Right lobe of liver (tissue), 6 donors: ENCODE measurements at regions of chr6 and their contacts with region 1.

Region 1: GRCh38 chr6:7238900-7239589 is 74.0 kb downstream of the SSR1 start:
- DNase-seq: peak; percentile 94 to 97 (median 97)
- ATAC-seq: peak; percentile 67 to 79 (median 74)
- H3K4me3 ChIP-seq: no peak overlapping the region
- H3K27ac ChIP-seq: peak overlapping the region; percentile 40 to 90 (median 61)
- H3K4me1 ChIP-seq: peaks cover 0 to 94% (median 40%) of the 10 kb centered on the region in 4 donors
- H3K27me3 ChIP-seq: no peaks in the 10 kb centered on the region
- CTCF ChIP-seq: peak; percentile 71 to 83 (median 76)
- POLR2A ChIP-seq: no peak

Region 2: GRCh38 chr6:6736791-6737654 is 502.0 kb before region 1 on chr6:
- intact Hi-C with region 1: loop called in 1 of 2 experiments (anchors 10 kb)
- DNase-seq: no peak
- ATAC-seq: peak; percentile 33 to 57 (median 42)
- H3K4me3 ChIP-seq: peak overlapping the region in 1 of 3 donors; percentile 30
- H3K27ac ChIP-seq: no peak overlapping the region
- H3K4me1 ChIP-seq: no peaks in the 10 kb centered on the region
- H3K27me3 ChIP-seq: no peaks in the 10 kb centered on the region
- CTCF ChIP-seq: no peak
- POLR2A ChIP-seq: no peak

Region 3: DNA sequence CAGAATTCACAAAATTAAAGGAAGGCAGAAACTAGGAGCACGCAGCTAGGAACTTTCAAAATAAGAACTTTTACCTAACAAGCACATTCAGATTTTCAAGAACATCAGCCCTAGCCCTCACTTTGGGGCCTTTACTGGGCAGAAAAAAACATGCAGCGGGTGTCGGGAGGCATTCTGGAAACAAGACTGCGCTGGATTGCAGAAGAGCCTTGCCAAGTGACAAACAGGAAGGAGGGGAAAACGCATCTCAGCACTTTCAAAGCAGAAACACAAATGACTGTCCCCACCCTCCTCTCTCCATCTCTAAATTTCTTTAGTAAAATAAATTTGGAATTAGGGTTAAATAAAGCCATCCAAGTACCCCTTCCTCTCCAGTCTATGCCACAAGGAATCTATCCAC is 205.8 kb before region 1 on chr6:
- intact Hi-C with region 1: no loop called
- DNase-seq: no peak
- ATAC-seq: peak; percentile 36 to 65 (median 48)
- H3K4me3 ChIP-seq: no peak overlapping the region
- H3K27ac ChIP-seq: no peak overlapping the region
- H3K4me1 ChIP-seq: peaks cover 0 to 8% (median 0%) of the 10 kb centered on the region in 4 donors
- H3K27me3 ChIP-seq: no peaks in the 10 kb centered on the region
- CTCF ChIP-seq: no peak
- POLR2A ChIP-seq: no peak

Region 4: GRCh38 chr6:7166410-7167305 is 72.4 kb before region 1 on chr6:
- intact Hi-C with region 1: loop called in 1 of 2 experiments (anchors 10 kb)
- DNase-seq: peak; percentile 64 to 82 (median 78)
- ATAC-seq: peak; percentile 42 to 51 (median 46)
- H3K4me3 ChIP-seq: no peak overlapping the region
- H3K27ac ChIP-seq: peak overlapping the region; percentile 45 to 88 (median 55)
- H3K4me1 ChIP-seq: peaks cover 0 to 100% (median 56%) of the 10 kb centered on the region in 4 donors
- H3K27me3 ChIP-seq: no peaks in the 10 kb centered on the region
- CTCF ChIP-seq: no peak
- POLR2A ChIP-seq: no peak

Region 5: GRCh38 chr6:7367408-7367807 is 128.4 kb after region 1 on chr6:
- intact Hi-C with region 1: no loop called
- DNase-seq: no peak
- ATAC-seq: no peak
- H3K4me3 ChIP-seq: no peak overlapping the region
- H3K27ac ChIP-seq: no peak overlapping the region
- H3K4me1 ChIP-seq: no peaks in the 10 kb centered on the region
- H3K27me3 ChIP-seq: no peaks in the 10 kb centered on the region
- CTCF ChIP-seq: no peak
- POLR2A ChIP-seq: no peak